HEK293 (cell line): ENCODE measurements at regions of chr5 and their contacts with region 1.

Region 1: DNA sequence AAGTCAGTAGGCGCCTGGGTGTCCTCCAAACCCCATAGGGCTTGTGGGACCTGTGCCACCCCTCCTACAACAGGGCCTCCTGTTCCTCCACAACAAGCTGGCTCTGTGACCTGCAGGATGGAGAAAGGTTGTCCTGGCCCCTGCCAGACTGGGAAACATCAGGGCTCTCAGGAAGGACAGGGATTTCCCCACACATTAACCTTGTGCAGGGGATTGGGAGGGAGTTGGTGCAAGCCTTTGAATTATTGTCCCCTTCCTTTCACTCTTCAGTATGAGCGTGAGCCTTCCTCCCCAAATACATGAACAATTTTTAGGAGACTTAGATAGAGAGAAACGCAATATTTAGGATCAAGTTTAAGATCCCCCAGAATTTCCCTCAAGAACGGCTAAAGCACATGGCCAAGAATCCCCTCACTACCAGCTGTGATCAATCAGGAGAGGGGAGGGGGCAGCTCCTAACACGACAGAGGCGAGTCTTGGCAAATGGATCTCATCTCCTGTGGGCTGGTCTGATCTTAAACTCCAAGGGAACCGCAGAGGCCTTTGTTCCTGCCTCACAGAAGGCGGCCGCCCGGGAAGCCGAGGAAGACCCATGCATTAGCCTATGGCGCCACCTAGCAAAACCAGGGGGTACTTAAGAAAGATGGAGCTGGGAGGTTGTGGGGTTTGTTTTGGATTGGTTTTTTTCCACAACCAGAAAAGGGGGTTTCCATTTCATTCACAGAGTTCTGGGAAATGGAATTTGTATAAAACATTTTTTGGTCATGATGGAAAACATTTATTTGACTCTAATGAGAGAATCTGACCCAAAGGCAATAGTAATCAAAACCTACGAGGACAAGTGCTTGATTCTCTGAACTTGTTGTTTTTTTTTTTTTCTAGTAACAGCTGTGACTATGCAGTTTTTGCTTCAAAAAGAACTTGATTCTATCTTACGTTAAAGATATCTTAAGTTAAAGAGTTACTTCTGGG is 36.1 kb upstream of the OSMR start:
- H3K4me3 ChIP-seq: no peak overlapping the region
- H3K27ac ChIP-seq: no peak overlapping the region; the same call in 1 of the 2 replicates
- H3K4me1 ChIP-seq: peaks cover 14% of the 10 kb centered on the region
- CTCF ChIP-seq: peak; percentile 92

Region 2: DNA sequence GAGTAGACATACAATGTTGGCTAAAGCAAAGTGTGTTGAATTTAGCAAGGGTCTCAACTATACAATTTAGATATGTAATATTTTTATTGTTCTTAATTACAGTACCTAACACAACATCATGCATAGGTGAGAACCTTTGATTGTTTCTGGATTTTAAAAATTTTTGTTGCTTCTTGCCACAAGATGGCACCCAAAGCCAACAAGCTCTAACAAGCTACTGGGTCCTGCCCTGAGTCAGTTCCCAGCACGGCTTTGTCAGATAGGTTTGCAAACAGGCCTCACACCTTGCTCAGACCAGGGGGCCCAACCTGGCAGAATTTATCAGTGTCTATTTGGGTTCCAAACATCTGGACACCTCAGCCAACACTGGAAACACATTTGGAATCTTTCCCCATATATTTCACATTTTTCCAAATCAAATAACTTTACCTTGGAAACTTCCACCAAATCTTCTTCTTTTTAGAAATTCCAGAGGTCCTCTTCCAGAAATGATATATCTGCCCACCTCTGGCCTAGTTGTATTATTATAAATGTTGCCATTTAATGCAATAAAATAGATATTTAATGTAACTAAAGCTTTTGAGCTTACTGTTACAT is 600.8 kb before region 1 on chr5:
- CTCF ChIA-PET with region 1: interaction called, 25 read pairs
- POLR2A ChIA-PET with region 1: no interaction called
- H3K4me3 ChIP-seq: no peak overlapping the region
- H3K27ac ChIP-seq: no peak overlapping the region
- H3K4me1 ChIP-seq: no peaks in the 10 kb centered on the region
- CTCF ChIP-seq: peak; percentile 67

Region 3: DNA sequence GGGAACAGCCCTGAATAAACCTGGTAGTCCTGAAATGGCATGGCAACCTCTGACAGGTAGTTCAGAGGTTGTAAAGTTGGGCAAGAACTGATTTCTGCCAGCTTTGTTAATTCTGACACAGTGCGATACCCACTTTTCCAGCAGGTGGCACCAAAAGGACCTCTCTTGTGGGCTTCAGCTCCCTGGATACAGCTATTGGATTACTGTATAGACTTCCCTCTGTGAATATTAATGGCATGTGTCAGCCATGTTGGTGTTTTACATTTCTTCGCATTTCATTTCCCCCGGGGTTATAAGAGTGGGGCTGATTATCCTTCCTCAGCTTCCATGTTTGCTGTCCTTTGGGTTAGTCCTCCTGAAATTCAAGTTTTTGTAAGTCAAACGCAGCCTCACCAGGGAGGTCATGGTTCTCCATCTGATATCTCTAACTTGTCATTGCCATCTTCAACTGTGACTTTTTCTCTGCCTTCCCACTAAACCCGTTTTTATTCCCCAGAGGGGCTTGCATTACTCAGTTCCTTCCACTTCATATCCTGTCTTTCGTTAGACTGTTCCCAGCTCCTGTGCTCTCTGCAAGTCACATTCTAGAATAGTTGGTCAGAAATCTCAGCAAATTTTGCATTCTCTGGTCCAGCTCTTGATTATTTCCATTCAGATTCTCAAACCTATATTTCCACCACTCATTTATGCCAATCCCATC is 388.8 kb before region 1 on chr5:
- CTCF ChIA-PET with region 1: interaction called, 163 read pairs
- POLR2A ChIA-PET with region 1: no interaction called
- H3K4me3 ChIP-seq: no peak overlapping the region
- H3K27ac ChIP-seq: no peak overlapping the region
- H3K4me1 ChIP-seq: peaks cover 14% of the 10 kb centered on the region
- CTCF ChIP-seq: peak; percentile 68

Region 4: GRCh38 chr5:38551030-38552017 is 258.4 kb before region 1 on chr5:
- CTCF ChIA-PET with region 1: interaction called, 43 read pairs
- POLR2A ChIA-PET with region 1: no interaction called
- H3K4me3 ChIP-seq: no peak overlapping the region
- H3K27ac ChIP-seq: no peak overlapping the region
- H3K4me1 ChIP-seq: peaks cover 35% of the 10 kb centered on the region
- CTCF ChIP-seq: peak; percentile 64; the same call in 1 of the 2 replicates

Region 5: GRCh38 chr5:38673671-38674071 is 136.0 kb before region 1 on chr5:
- CTCF ChIA-PET with region 1: interaction called, 42 read pairs
- POLR2A ChIA-PET with region 1: no interaction called
- H3K4me3 ChIP-seq: no peak overlapping the region
- H3K27ac ChIP-seq: no peak overlapping the region
- H3K4me1 ChIP-seq: peaks cover 15% of the 10 kb centered on the region
- CTCF ChIP-seq: no peak

Region 6: DNA sequence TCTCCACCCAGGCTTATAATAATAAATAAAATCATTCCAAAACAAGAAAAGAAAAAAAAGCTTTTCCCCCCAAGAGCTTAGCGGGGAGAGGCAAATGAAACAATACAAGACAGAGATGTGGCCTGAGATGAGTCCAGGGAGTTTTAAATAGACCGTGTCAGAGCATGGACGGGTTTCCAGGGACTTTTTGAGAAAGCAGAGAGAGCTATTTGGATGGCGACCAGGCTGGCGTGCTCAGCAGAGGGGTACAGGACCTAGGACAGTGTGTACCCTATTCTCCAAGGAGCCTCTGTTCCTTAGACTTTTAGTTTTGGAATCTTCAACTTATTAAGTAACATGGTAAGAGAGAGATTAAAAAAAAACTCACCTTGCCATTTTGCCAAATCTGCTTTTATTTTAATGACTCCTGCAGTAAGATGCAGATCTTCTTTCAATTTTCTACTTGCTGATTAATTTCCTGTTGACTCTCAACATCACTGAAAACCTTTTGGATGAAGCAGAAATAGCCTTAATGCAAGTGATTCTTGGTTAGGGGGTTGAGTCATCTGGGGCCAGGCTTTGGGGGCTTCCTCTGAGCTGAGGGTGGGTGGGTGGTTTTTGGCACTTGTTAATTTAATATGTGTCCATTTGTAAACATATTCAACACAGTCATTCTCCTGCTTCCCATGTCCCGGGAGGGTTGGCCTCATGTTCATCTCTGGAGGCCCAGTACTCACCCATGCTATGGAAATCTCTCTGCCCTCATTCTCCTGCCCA is 13.5 kb before region 1 on chr5:
- CTCF ChIA-PET with region 1: interaction called, 12 read pairs
- POLR2A ChIA-PET with region 1: no interaction called
- H3K4me3 ChIP-seq: no peak overlapping the region
- H3K27ac ChIP-seq: no peak overlapping the region
- H3K4me1 ChIP-seq: no peaks in the 10 kb centered on the region
- CTCF ChIP-seq: no peak

Region 7: DNA sequence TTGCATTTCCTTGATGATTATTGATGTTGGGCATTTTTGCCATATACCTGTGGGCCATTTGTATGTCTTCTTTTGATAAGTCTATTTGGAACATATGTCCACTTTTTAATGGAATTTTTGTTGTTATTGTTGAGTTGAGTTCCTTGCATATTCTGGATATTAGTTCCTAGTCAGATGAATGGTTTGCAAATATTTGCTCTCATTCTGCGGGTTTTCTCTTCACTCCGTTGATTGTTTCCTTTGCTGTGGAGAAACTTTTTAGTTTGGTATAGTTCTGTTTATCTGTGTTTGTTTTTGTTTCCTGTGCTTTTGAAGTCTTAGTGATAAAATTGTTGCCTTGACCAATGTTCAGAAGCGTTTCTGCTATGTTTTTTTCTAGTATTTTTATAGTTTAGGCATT is 49.2 kb after region 1 on chr5:
- CTCF ChIA-PET with region 1: no interaction called
- POLR2A ChIA-PET with region 1: no interaction called
- H3K4me3 ChIP-seq: no peak overlapping the region
- H3K27ac ChIP-seq: no peak overlapping the region
- H3K4me1 ChIP-seq: no peaks in the 10 kb centered on the region
- CTCF ChIP-seq: no peak